AG04450 (cell line): ENCODE measurements at regions of chr7 and their contacts with region 1.

Region 1: DNA sequence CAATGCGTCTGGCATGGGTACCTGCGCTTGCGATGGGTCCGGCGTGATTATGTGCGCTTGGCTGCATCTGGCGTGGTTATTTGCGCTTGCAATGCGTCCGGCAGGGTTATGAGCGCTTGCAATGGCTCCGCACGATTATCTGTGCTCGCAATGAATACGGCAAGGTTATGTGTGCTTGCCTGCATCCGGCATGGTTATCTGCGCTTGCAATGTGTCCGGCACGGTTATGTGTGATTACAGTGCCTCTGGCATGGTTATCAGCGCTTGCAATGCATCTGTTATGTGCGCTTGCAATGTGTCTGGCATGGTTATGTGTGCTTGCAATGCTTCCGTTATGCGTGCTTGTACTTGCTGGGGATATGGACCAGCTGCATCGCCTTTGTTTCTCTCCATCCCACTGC is 37.7 kb downstream of the RBAK start:
- DNase-seq: no peak
- H3K4me3 ChIP-seq: no peak overlapping the region
- H3K27ac ChIP-seq: no peak overlapping the region
- H3K27me3 ChIP-seq: peaks cover 4% of the 10 kb centered on the region
- CTCF ChIP-seq: no peak

Region 2: DNA sequence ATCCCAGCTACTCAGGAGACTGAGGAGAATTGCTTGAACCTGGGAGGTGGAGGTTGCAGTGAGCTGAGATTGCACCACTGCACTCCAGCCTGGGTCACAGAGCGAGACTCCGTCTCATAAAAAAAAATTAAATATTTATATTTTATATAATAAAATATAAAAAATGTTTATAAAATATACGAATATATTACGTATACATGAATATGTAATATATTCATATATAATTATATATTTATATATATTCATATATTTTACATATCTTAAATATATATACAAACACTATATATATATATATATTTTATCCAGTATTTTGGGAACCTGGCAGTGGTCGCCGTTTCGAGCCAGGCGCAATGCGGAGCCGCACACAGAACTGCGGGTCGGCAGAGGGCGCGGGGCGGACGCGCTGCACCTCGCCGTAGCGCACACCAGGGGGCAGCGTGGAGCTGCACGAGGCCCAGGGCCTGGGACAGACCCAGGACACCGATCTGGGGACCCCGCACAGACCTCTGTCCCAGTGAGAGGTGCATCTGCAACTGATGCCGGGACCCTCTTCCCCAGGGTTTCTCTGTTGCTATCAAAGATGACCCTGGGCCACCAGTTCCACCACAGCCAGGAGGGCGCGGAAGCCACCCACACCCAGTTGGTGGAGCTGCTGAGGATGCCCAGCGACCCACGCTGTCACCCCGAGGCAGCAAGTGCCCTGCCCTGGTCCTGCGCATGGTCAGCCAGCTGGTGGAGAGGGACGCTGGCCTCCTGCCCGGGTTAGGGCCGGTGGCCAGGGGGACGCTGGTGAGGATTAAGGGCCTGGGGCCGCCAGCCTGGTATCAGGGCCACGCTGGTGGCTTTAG is 285.2 kb before region 1 on chr7:
- CTCF ChIA-PET with region 1: interaction called, 50 read pairs
- POLR2A ChIA-PET with region 1: no interaction called
- DNase-seq: no peak
- H3K4me3 ChIP-seq: no peak overlapping the region
- H3K27ac ChIP-seq: no peak overlapping the region
- H3K27me3 ChIP-seq: no peaks in the 10 kb centered on the region
- CTCF ChIP-seq: peak; percentile 78

Region 3: GRCh38 chr7:4830176-4830575 is 253.1 kb before region 1 on chr7:
- CTCF ChIA-PET with region 1: interaction called, 13 read pairs
- POLR2A ChIA-PET with region 1: no interaction called
- DNase-seq: peak; percentile 20
- H3K4me3 ChIP-seq: no peak overlapping the region
- H3K27ac ChIP-seq: no peak overlapping the region
- H3K27me3 ChIP-seq: peaks cover 2% of the 10 kb centered on the region
- CTCF ChIP-seq: peak; percentile 83

Region 4: DNA sequence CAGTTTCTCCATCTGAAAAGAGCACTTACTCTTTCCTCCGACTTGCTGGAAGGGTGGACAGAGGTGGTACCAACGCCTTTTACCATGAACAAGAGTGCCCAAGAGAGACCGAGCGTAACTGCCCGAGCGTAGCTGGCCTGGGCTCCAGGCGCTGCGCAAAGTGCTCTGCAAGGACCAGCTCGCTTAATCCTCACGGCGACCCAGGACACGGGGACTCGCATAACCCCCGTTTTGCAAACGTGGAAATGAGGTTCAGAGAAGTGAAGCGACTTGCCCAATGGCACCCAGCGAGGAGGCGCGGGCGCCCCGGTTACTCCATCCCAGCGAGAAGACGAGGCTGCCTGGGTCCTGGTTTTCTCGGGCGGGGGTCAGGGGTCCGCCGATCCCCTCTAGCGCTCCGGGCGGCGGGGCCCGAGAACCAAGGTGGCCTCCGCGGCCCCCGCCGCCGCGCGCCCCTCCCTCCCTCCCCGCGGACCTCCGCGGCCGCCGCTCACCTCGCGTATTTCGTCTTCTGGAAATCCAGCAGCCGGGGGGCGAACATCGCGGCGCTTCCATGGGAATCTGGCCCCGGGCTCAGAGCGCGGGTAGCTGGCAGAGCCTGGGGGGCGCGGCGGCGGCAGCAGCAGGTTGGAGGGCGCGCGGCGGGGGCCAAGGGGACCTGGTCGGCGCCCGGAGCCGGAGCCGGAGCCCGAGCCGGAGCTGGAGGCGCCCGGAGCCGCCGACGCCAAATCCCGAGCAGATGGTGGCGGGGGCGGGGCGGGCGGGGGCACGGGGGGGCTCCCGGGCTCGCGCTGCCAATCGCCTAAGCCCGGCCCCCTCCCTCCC is 124.6 kb before region 1 on chr7 and contains the start of gene MMD2:
- CTCF ChIA-PET with region 1: interaction called, 11 read pairs
- POLR2A ChIA-PET with region 1: no interaction called
- DNase-seq: no peak
- H3K4me3 ChIP-seq: no peak within 1 kb of the TSS
- H3K27ac ChIP-seq: no peak within 1 kb of the TSS
- H3K27me3 ChIP-seq: peaks cover 20% of the 10 kb centered on the region
- CTCF ChIP-seq: no peak
- polyA plus RNA-seq, gene MMD2: not detected in 2 replicates

Region 5: GRCh38 chr7:5231811-5232484 is 148.6 kb after region 1 on chr7:
- CTCF ChIA-PET with region 1: no interaction called
- POLR2A ChIA-PET with region 1: no interaction called
- DNase-seq: no peak
- H3K4me3 ChIP-seq: no peak overlapping the region
- H3K27ac ChIP-seq: no peak overlapping the region
- H3K27me3 ChIP-seq: no peaks in the 10 kb centered on the region
- CTCF ChIP-seq: no peak

Region 6: GRCh38 chr7:5284304-5285281 is 201.3 kb after region 1 on chr7:
- CTCF ChIA-PET with region 1: no interaction called
- POLR2A ChIA-PET with region 1: no interaction called
- DNase-seq: no peak
- H3K4me3 ChIP-seq: no peak overlapping the region
- H3K27ac ChIP-seq: no peak overlapping the region
- H3K27me3 ChIP-seq: no peaks in the 10 kb centered on the region
- CTCF ChIP-seq: peak; percentile 30

Region 7: GRCh38 chr7:5314864-5315263 is 231.6 kb after region 1 on chr7:
- CTCF ChIA-PET with region 1: no interaction called
- POLR2A ChIA-PET with region 1: no interaction called
- DNase-seq: no peak
- H3K4me3 ChIP-seq: no peak overlapping the region
- H3K27ac ChIP-seq: no peak overlapping the region
- H3K27me3 ChIP-seq: no peaks in the 10 kb centered on the region
- CTCF ChIP-seq: no peak